Activated CD4-positive, alpha-beta T cell treated with anti-CD3 and anti-CD28 coated beads, Interleukin-2, amount 10 ng/mL, durations not matched to agents 24 days and 14 days (primary cell): ENCODE measurements at regions of chr12 and their contacts with region 1.

Region 1: DNA sequence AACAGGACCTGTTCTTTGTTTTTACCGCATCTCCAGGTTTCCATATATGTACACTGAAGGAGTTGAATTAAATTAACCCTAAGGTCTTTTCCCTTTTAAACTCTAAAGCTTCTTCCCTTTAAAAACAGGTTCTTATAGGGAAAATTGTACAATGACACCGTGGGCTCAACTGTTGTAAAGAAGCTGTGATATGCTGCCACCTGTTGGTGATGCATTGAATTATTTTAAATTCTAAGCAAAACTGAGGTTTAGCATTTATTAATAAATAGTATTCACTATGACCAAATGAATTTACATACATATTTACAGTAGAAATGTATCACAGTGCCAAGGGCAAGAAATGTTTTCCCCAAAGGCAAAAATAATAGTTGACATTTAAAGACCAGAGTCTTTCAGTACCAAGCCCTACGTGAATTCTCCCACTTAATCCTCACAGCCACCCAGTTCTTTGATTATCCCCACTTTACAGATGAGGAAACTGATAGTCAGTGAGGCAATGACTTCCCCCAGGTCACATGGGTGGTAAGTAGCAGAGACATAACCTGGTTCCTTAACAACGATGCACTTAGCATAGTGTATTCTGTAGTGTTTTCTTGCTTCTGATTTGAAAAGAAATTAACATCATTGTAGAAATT is 35.7 kb upstream of the TMEM263 start:
- DNase-seq: peak; percentile 74
- H3K4me3 Mint-ChIP-seq: no peak overlapping the region
- H3K27ac Mint-ChIP-seq: no peak overlapping the region
- H3K4me1 Mint-ChIP-seq: peaks cover 11% of the 10 kb centered on the region
- H3K27me3 Mint-ChIP-seq: peaks cover 23% of the 10 kb centered on the region

Region 2: GRCh38 chr12:106357549-106358395 is 562.3 kb before region 1 on chr12 and contains the start of gene POLR3B:
- intact Hi-C with region 1: loop called (anchors 1 kb)
- DNase-seq: peak; percentile 98
- H3K4me3 Mint-ChIP-seq: peak within 1 kb of the TSS; percentile 92
- H3K27ac Mint-ChIP-seq: peak within 1 kb of the TSS; percentile 96
- H3K4me1 Mint-ChIP-seq: peaks cover 17% of the 10 kb centered on the region
- H3K27me3 Mint-ChIP-seq: no peaks in the 10 kb centered on the region
- total RNA-seq, gene POLR3B: 12.1 and 13.1 TPM in 2 replicates

Region 3: DNA sequence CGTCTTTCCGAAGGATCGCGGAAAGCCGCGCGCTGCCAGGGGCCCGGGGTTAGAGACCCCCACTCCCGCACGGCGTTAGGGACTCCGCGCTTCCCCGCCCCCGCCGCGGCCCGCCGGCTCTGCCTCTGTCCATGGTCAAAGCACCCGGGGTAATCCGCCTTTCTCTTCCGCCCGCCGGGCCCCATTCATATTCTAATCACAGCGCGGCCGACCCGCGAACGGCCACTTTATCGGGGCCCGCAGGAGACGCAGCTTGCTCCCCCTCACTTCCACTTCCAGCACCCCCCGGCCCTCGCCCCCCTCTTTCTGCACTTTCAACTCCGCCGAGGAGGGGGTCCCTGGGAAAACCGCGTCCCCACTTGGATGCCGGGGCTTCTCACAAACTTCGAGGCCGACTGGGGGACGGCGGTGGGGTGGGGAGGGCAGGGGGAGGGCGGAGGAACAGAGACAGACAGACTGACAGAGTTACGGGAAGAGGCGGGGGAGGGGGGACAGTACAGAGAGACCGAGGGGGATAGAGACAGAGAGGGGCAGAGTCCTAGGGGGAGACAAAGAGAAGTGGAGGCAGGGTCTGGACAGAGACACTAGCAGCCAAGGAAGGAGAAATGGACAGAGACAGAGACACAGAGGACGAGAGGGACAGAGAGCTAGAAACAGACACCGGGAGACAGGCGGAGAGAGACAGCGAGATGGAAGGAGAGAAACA is 338.3 kb before region 1 on chr12:
- intact Hi-C with region 1: loop called (anchors 10 kb)
- DNase-seq: no peak
- H3K4me3 Mint-ChIP-seq: no peak overlapping the region
- H3K27ac Mint-ChIP-seq: no peak overlapping the region
- H3K4me1 Mint-ChIP-seq: peaks cover 8% of the 10 kb centered on the region
- H3K27me3 Mint-ChIP-seq: peaks cover 83% of the 10 kb centered on the region

Region 4: GRCh38 chr12:106736051-106736957 is 183.7 kb before region 1 on chr12:
- intact Hi-C with region 1: loop called (anchors 1 kb)
- DNase-seq: no peak
- H3K4me3 Mint-ChIP-seq: no peak overlapping the region
- H3K27ac Mint-ChIP-seq: no peak overlapping the region
- H3K4me1 Mint-ChIP-seq: peaks cover 2% of the 10 kb centered on the region
- H3K27me3 Mint-ChIP-seq: peaks cover 23% of the 10 kb centered on the region

Region 5: DNA sequence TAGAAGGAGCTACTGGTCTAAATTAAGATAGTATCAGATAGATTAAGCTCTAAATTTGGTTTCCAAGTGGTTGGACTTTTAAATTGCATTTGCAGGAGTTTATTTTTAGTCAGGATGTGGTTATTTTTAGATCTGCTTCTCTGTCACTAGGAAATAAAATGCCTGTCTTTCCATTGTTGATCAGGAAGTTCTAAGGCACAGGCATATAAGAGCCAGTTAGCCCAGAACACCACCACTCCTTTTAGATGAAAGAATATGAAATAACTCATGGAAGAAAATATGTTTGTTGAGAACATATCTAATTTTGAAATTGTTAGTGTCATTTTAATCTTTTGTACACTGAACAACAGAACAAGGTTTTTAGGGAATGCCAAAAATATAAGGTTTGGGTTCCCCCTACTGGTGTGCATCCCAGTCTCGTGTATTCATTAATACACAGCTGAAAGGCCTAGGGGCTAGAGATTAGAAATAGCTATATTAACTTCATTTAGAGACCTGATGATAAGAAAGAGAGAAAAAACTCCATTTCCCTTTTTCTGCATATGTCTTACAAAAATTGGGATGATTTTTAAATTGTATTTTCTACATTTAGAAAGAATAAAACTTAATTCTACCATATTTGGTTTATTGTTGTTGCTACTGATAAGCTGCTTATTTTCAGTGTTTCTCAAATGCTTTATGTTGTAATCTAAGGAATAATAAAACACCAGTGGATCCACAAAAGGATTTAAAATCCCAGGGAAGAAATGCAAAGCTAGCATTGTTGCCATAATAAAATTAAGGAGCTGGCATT is 78.3 kb before region 1 on chr12:
- intact Hi-C with region 1: loop called (anchors 5 kb)
- DNase-seq: peak; percentile 70
- H3K4me3 Mint-ChIP-seq: no peak overlapping the region
- H3K27ac Mint-ChIP-seq: no peak overlapping the region
- H3K4me1 Mint-ChIP-seq: peaks cover 6% of the 10 kb centered on the region
- H3K27me3 Mint-ChIP-seq: no peaks in the 10 kb centered on the region

Region 6: DNA sequence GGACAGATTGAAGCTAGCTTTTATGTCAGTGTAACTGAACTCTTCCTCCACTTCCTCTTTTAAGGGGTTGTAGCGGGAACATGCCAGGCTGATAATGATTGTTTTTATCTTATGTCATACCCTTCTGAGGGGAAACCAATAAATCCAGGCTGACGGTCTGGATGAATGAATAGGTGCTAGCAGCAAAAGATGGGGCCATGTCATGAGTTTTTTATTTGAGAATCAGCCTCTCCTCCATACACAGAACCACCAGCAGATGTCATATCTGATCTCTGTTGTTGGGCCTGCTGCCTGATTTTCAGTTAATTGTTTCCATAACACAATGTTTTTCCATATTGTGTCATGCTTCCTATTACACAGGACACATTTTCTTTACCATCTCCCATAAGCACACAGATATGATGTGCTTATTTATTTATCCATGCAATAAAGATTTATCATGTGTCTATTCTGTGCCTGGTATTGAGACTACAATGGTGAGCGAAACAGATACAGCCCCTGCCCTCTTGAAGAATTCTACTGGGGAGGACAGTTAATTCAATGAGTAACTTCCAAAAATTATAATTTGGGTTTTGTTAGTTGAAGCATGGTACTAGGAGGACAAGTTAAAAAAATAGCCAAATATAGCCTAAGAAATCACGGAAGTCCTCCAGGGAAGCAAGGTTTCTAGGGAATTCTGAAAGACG is 206.9 kb after region 1 on chr12:
- intact Hi-C with region 1: no loop called
- DNase-seq: no peak
- H3K4me3 Mint-ChIP-seq: no peak overlapping the region
- H3K27ac Mint-ChIP-seq: no peak overlapping the region
- H3K4me1 Mint-ChIP-seq: no peaks in the 10 kb centered on the region
- H3K27me3 Mint-ChIP-seq: peaks cover 21% of the 10 kb centered on the region